Tibial artery (tissue), 4 donors: ENCODE measurements at regions of chr4 and their contacts with region 1.

Region 1: DNA sequence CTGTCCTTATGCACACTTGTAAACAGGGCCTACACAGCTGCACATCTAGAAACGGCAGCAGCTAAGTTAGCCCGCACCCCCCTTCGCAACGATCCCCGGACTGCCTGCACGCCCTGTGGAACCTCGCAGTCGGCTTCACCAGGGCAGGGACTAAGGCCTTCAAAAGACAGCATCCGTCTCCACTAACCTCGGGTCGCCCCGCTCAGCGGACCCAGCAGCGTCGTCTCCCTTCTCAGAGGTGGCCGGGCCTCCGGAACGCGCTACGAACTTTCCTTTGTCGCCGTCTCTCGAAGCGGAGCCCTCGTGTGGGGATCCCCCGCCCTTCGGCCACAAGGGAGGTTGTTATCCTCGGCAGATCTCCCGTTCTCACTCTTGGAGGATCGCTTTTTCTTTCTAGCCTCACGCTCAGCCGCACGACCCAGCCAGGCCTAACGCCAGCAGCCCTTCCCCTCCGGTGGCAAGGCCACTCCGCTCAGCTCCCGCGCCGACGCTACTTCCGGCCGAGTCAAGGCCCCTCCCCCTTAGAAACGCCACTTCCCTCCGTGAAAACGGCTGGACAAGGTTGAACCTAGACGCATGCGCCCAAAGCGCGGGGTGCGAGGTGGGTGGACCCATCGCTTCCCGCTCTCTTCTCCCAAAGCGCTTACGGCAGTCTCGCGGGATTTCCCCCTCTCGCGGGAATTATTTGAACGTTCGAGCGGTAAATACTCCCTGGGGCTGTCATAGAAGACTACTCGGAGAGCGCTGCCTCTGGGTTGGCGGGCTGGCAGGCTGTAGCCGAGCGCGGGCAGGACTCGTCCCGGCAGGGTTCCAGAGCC is at the starts of genes DCAF16 and NCAPG:
- DNase-seq: peak; percentile 98 to 100
- H3K4me3 ChIP-seq: peak within 1 kb of the TSS; percentile 80 to 94
- H3K27ac ChIP-seq: peak within 1 kb of the TSS; percentile 93 to 97
- H3K4me1 ChIP-seq: peaks cover 0 to 51% (median 32%) of the 10 kb centered on the region in 4 donors
- H3K27me3 ChIP-seq: no peaks in the 10 kb centered on the region
- CTCF ChIP-seq: no peak

Region 2: GRCh38 chr4:17576932-17577665 is 233.4 kb before region 1 on chr4 and contains the start of gene LAP3:
- intact Hi-C with region 1: loop called (anchors 2 kb)
- DNase-seq: peak; percentile 96 to 98
- H3K4me3 ChIP-seq: peak within 1 kb of the TSS; percentile 74 to 85
- H3K27ac ChIP-seq: peak within 1 kb of the TSS; percentile 89 to 90
- H3K4me1 ChIP-seq: peaks cover 0 to 24% (median 13%) of the 10 kb centered on the region in 4 donors
- H3K27me3 ChIP-seq: no peaks in the 10 kb centered on the region
- CTCF ChIP-seq: no peak

Region 3: GRCh38 chr4:17614416-17615299 is 195.8 kb before region 1 on chr4 and contains the start of gene MED28:
- intact Hi-C with region 1: loop called (anchors 10 kb)
- DNase-seq: peak; percentile 97 to 98
- H3K4me3 ChIP-seq: peak within 1 kb of the TSS; percentile 79 to 87
- H3K27ac ChIP-seq: peak within 1 kb of the TSS; percentile 82 to 88
- H3K4me1 ChIP-seq: peaks cover 0 to 49% (median 34%) of the 10 kb centered on the region in 4 donors
- H3K27me3 ChIP-seq: no peaks in the 10 kb centered on the region
- CTCF ChIP-seq: peak in 1 of 2 experiments; percentile 36

Region 4: GRCh38 chr4:18021722-18022571 is 211.5 kb after region 1 on chr4 and contains the start of gene LCORL:
- intact Hi-C with region 1: loop called (anchors 5 kb)
- DNase-seq: peak; percentile 92 to 96
- H3K4me3 ChIP-seq: peak within 1 kb of the TSS; percentile 91 to 97
- H3K27ac ChIP-seq: peak within 1 kb of the TSS; percentile 91 to 97
- H3K4me1 ChIP-seq: peaks cover 0 to 11% (median 11%) of the 10 kb centered on the region in 4 donors
- H3K27me3 ChIP-seq: no peaks in the 10 kb centered on the region
- CTCF ChIP-seq: no peak